Natural killer cell (primary cell): ENCODE measurements at regions of chr11 and their contacts with region 1.

Region 1: DNA sequence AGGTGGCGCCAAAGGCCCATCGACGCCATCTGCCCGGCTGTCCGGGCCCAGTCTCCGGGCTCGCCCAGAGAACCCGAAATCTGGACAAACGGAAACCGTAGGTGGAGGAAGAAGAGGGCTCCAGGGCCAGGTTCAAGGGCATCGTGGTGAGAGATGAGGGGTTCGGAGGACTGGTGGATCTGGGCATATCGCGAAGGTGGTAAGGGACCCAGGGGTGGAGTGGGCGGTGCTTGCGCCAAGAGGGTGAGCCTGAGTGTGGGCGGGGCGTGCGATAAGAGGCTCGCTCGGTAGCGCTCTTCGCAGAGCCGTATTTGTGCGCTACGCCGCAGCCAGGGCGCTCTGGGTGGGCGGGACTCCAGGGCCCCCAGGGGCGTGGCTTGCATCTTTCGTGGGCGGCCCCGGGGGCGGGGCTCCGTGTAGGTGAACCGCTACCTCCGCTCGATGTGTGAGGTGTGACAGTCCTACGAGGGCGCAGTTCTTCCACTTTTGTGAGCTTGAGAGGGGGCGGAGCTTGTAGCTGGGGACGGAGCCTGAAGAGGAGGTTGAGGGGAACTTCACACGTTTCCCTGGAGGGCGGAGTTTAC is 4.8 kb downstream of the CD248 start:
- DNase-seq: peak; percentile 95 to 99
- ATAC-seq: peak; percentile 77 to 89 (median 78)
- H3K4me3 ChIP-seq: peak overlapping the region; percentile 51
- H3K4me3 Mint-ChIP-seq: peak overlapping the region; percentile 98
- H3K27ac ChIP-seq: peak overlapping the region; percentile 85
- H3K27ac Mint-ChIP-seq: peak overlapping the region; percentile 94 to 97
- H3K4me1 ChIP-seq: peaks cover 23% of the 10 kb centered on the region
- H3K4me1 Mint-ChIP-seq: peaks cover 11 to 21% of the 10 kb centered on the region in 2 donors
- H3K27me3 ChIP-seq: no peaks in the 10 kb centered on the region
- H3K27me3 Mint-ChIP-seq: peaks cover 11 to 22% of the 10 kb centered on the region in 2 donors
- CTCF ChIP-seq: peak; percentile 57

Region 2: DNA sequence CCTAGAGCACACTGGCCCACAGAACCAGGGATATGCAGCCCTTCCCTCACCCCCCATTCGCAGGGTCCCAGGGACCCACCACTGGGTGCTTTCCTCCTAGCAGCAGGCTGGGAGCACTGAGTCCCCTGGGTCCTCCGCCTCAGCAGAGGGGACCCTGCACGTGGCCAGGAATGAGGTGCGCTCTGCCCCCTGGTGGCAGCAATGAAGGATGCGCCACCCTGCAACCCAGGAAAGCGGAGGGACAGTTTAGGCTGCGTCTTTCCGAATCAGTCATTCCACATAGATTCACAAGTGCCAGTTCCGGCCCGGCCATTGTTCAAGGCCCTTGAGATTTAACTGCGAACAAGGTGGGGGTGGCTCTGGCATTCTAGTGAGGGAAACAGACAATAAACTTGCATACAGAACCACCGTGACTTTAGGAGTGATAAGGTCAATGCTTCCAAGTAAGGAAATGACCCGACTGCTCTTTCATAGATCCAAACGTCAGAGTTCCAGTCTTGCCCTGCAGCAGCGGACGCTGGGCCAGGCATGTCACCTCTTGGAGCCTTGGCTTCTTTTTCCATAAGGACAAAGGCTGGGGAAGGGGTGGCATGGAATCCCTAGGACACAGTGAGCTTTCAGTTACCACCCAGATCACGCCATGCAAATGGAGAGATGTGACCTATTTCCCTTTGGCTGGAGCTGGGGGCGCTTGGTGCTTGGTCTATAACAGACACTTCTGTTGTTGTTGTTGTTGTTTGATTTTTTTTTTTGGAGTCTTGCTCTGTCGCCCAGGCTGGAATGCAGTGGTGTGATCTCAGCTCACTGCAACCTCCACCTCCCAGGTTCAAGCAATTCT is 16.5 kb after region 1 on chr11:
- intact Hi-C with region 1: loop called (anchors 1 kb)
- DNase-seq: peak; percentile 79 to 93
- ATAC-seq: peak; percentile 69 to 82 (median 75)
- H3K4me3 ChIP-seq: no peak overlapping the region
- H3K4me3 Mint-ChIP-seq: peak overlapping the region; percentile 74
- H3K27ac ChIP-seq: peak overlapping the region; percentile 14
- H3K27ac Mint-ChIP-seq: peak overlapping the region; percentile 19 to 74
- H3K4me1 ChIP-seq: peaks cover 40% of the 10 kb centered on the region
- H3K4me1 Mint-ChIP-seq: peaks cover 19 to 36% of the 10 kb centered on the region in 2 donors
- H3K27me3 ChIP-seq: peaks cover 3% of the 10 kb centered on the region
- H3K27me3 Mint-ChIP-seq: peaks cover 8 to 9% of the 10 kb centered on the region in 2 donors
- CTCF ChIP-seq: peak; percentile 96

Region 3: DNA sequence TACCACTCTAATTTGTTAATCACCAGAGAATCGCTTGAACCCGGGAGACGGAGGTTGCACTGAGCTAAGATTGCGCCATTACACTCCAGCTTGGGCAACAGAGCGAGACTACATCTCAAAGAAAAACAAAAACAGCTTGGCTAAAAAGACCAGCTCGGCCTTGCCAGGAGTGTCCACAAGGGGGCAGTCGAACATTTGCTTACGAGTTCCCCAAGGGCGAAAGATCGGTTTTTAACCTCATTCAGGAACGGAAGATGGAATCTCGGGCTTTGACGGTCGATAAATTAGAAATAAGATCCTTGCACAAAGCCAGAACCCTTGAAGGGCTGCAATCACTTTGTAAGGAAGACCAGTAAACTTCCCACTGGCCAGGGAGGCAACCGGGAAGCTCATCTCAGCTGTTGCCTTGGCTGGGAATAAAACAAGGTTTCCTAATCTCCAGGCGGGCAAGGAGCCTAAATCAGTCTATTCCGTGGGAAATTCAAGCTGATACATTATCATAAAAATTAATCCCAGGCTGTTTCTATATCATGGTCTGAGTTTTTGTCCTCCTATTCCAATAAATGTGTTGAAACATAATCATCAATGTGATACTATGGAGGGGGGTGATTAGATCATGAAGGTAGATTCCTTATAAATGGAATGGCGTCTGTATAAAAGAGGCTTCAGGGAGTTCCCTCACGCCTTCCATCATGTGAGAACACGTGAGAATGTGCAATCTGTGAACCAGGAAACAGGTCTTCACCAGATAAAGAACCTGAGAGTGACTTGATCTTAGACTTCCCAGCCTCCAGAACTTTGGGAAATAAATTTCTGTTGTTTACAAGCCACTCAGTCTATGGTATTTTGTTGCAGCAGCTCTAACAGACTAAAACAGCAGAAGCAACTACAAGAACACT is 74.4 kb after region 1 on chr11:
- intact Hi-C with region 1: loop called (anchors 1 kb)
- DNase-seq: peak; percentile 73 to 90
- ATAC-seq: peak; percentile 74 to 79 (median 77)
- H3K4me3 ChIP-seq: no peak overlapping the region
- H3K4me3 Mint-ChIP-seq: peak overlapping the region; percentile 13
- H3K27ac ChIP-seq: no peak overlapping the region
- H3K27ac Mint-ChIP-seq: peak overlapping the region in 1 of 2 donors; percentile 47
- H3K4me1 ChIP-seq: peaks cover 9% of the 10 kb centered on the region
- H3K4me1 Mint-ChIP-seq: peaks cover 6 to 8% of the 10 kb centered on the region in 2 donors
- H3K27me3 ChIP-seq: no peaks in the 10 kb centered on the region
- H3K27me3 Mint-ChIP-seq: peaks cover 0 to 7% of the 10 kb centered on the region in 2 donors
- CTCF ChIP-seq: peak; percentile 82

Region 4: DNA sequence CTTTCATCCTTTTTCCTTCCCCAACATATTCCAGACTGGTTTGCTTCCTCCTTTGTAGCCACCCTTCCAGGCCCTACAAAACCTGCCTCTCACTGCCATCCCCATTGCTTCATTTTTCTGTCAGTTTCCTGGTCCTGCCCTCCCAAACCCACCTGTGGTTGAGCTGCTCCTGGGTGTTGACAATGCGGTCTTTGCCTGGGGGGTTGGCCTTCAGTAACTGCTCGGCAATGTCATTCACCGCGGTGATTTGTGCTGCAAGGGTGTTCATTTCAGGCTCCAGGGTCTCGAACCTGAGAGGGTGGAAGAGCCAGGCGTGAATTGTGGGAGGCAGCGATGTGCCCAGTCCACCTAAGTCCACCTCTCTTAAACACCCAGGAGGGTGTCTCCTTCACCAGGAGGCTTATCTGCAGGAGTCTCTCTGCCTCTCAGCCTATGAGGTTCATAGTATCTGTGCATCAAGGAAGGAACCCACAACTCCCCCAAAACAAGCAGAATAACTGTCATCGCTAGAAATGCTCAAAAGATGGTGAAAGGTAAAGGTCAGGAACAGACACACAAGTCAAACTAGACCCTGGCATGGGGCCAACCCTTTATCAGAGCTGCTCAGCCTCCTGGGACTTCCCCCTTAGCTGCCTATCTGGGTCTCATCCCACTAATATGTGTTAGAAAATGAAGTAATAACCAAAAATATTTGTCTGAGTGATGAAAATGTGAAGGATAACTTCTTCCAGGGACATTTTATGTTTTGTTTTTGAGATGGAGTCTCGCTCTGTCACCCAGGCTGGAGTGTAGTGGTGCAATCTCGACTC is 389.6 kb after region 1 on chr11:
- intact Hi-C with region 1: no loop called
- DNase-seq: no peak
- ATAC-seq: no peak
- H3K4me3 ChIP-seq: no peak overlapping the region
- H3K4me3 Mint-ChIP-seq: no peak overlapping the region
- H3K27ac ChIP-seq: no peak overlapping the region
- H3K27ac Mint-ChIP-seq: no peak overlapping the region
- H3K4me1 ChIP-seq: no peaks in the 10 kb centered on the region
- H3K4me1 Mint-ChIP-seq: peaks cover 0 to 5% of the 10 kb centered on the region in 2 donors
- H3K27me3 ChIP-seq: no peaks in the 10 kb centered on the region
- H3K27me3 Mint-ChIP-seq: peaks cover 0 to 2% of the 10 kb centered on the region in 2 donors
- CTCF ChIP-seq: no peak